ENCODE measurements at regions of chr11 and their contacts with region 1.

Region 1: GRCh38 chr11:1889224-1890120 is 2.2 kb downstream of the PRR33 start:
- DNase-seq: peak; percentile 66 to 90 (median 83)
- H3K4me3 ChIP-seq: peak overlapping the region; percentile 50 to 87 (median 71)
- H3K27ac ChIP-seq: peak overlapping the region; percentile 33 to 79
- H3K4me1 ChIP-seq: peaks cover 0 to 69% (median 55%) of the 10 kb centered on the region in 4 experiments
- H3K27me3 ChIP-seq: no peaks in the 10 kb centered on the region

Region 2: GRCh38 chr11:1803246-1803645 is 86.2 kb before region 1 on chr11:
- CTCF ChIA-PET with region 1: no interaction called
- POLR2A ChIA-PET with region 1: no interaction called
- DNase-seq: no peak
- H3K4me3 ChIP-seq: no peak overlapping the region
- H3K27ac ChIP-seq: no peak overlapping the region
- H3K4me1 ChIP-seq: no peaks in the 10 kb centered on the region
- H3K27me3 ChIP-seq: peaks cover 0 to 10% (median 2%) of the 10 kb centered on the region in 5 experiments

Region 3: GRCh38 chr11:1917671-1918516 is 28.4 kb after region 1 on chr11:
- CTCF ChIA-PET with region 1: interaction called, 53 read pairs
- POLR2A ChIA-PET with region 1: interaction called, 7 read pairs
- DNase-seq: no peak
- H3K4me3 ChIP-seq: no peak overlapping the region
- H3K27ac ChIP-seq: no peak overlapping the region
- H3K4me1 ChIP-seq: peaks cover 0 to 33% (median 22%) of the 10 kb centered on the region in 4 experiments
- H3K27me3 ChIP-seq: no peaks in the 10 kb centered on the region

Region 4: GRCh38 chr11:1946812-1947484 is 57.5 kb after region 1 on chr11 and contains the start of gene MRPL23:
- CTCF ChIA-PET with region 1: interaction called, 36 read pairs
- POLR2A ChIA-PET with region 1: interaction called, 7 read pairs
- DNase-seq: no peak
- H3K4me3 ChIP-seq: no peak within 1 kb of the TSS
- H3K27ac ChIP-seq: no peak within 1 kb of the TSS
- H3K4me1 ChIP-seq: peaks cover 0 to 13% (median 9%) of the 10 kb centered on the region in 4 experiments
- H3K27me3 ChIP-seq: no peaks in the 10 kb centered on the region